ENCODE measurements at regions of chr6 and their contacts with region 1.

Region 1: DNA sequence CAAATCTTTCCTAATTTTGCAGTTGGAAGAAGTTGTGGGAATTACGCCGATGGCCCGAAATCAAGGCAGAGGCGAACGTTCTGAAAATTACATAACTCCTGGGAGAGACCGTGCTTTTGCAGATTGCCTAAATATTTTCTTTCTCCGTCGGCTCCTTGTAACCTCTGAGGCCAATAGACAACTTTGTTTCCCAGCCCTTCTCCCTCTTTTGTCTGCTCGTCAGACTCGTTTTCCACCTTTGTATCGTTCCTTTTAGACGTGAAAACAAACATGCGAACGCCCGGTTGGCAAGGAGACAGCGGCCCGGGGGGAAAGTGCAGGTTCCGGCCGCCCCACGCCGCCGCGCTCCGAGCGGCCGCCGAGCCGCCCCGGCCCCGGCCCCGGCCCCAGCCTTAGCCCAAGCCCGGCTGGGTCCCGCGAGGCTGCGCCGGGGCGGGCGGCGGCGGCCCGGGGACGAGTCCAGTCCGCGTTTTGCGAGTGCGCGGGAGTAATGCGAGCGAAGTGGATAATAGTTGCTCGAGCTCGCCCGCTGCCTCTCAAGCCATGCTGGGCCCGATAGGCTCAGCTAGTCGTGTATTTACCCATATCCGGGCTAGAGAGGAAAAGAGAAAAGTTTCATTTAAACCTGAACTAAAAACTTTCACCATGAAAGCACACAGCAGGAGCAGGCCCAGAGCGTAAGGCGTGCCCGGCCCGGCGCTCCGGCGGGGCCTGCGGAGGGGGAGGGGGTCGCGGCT is at the start of gene ARID1B:
- DNase-seq: peak; percentile 75
- H3K4me3 Mint-ChIP-seq: peak within 1 kb of the TSS; percentile 97
- H3K27ac Mint-ChIP-seq: peak within 1 kb of the TSS; percentile 98
- H3K4me1 Mint-ChIP-seq: peaks cover 52% of the 10 kb centered on the region
- H3K27me3 Mint-ChIP-seq: peaks cover 3% of the 10 kb centered on the region
- total RNA-seq, gene ARID1B: 73.6 and 79.1 TPM in 2 replicates

Region 2: GRCh38 chr6:156564127-156564806 is 212.7 kb before region 1 on chr6:
- intact Hi-C with region 1: loop called (anchors 2 kb)
- DNase-seq: peak; percentile 65
- H3K4me3 Mint-ChIP-seq: no peak overlapping the region
- H3K27ac Mint-ChIP-seq: no peak overlapping the region
- H3K4me1 Mint-ChIP-seq: peaks cover 7% of the 10 kb centered on the region
- H3K27me3 Mint-ChIP-seq: peaks cover 3% of the 10 kb centered on the region

Region 3: DNA sequence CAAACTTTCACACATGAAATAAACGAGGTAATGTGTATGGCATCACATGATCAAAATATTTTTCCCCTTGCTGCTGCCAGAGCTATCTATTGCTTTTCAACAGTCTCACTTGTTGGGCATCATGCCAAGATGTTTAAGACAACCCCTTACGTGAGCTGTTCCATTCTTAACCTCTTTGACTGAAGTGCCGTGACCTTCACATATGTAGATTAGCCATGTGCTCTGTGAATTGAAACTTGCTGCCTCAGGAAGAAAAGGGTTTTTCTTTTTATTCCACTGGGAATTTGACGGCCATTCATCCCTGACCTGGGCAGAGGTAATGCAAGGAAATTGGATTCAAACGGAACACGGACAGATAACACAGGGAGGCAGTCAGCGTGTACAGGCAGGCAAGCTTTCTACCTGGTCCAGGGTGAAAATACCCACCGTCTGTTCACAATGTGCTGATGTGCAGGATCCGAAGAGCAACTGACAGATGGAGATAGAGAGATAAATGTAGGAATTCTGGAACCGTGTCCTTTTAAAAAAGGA is 14.4 kb after region 1 on chr6:
- intact Hi-C with region 1: no loop called
- DNase-seq: no peak
- H3K4me3 Mint-ChIP-seq: no peak overlapping the region
- H3K27ac Mint-ChIP-seq: no peak overlapping the region
- H3K4me1 Mint-ChIP-seq: peaks cover 43% of the 10 kb centered on the region
- H3K27me3 Mint-ChIP-seq: no peaks in the 10 kb centered on the region

Region 4: DNA sequence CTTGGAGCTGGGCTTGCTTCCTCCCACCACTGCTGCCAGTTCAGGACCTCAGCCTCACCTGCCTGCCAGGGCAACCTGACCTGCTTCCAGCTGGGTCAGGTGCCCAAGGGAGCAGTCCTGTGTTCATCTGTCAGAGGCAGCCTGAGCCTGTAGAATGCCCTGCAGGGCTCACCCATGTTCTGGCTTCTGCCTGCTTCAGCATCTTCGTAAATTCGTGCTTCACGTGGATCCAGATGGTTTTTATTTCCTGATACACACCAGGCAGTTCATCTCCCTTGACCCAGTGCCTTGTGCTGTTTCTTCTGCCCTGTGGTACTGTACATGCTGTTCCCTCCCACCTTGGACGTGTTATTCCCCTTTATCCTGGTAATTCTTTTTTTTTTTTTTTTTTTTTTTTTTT is 50.4 kb after region 1 on chr6:
- intact Hi-C with region 1: no loop called
- DNase-seq: no peak
- H3K4me3 Mint-ChIP-seq: no peak overlapping the region
- H3K27ac Mint-ChIP-seq: peak overlapping the region; percentile 53
- H3K4me1 Mint-ChIP-seq: peaks cover 22% of the 10 kb centered on the region
- H3K27me3 Mint-ChIP-seq: no peaks in the 10 kb centered on the region

Region 5: GRCh38 chr6:156857573-156857972 is 80.6 kb after region 1 on chr6:
- intact Hi-C with region 1: loop called (anchors 1 kb)
- DNase-seq: peak; percentile 11
- H3K4me3 Mint-ChIP-seq: no peak overlapping the region
- H3K27ac Mint-ChIP-seq: peak overlapping the region; percentile 90
- H3K4me1 Mint-ChIP-seq: peaks cover 56% of the 10 kb centered on the region
- H3K27me3 Mint-ChIP-seq: no peaks in the 10 kb centered on the region

Region 6: DNA sequence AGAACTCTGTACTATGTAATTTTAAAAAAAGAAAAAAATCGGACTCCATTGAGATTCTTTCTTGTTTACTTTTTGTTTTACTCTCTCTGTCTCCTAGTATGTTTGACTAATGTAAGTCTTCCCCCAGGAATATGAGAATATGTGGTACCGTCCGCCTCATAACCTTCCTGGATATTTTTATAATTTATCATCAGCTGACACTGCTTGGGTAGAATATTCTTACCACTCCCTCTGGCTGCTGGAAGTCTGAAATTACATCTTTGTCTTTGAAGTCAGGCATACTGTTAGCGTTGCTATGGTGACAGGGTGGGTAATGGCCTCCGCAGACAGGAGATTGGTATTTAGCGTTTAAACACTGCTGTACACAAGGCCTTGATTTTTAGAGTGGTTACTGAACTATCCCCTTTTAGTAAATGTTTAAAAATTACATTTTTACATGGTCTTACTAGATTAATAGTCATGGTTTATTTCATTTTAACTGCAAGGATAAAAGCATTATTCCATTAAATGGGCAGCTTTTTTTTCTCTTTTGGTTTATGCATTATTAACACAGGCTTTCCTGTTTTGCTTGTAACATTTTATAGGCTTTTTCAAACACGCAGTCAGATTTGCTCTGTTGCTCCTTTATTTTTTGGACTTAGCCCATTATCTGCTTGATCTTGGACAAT is 176.6 kb after region 1 on chr6:
- intact Hi-C with region 1: loop called (anchors 2 kb)
- DNase-seq: peak; percentile 14
- H3K4me3 Mint-ChIP-seq: no peak overlapping the region
- H3K27ac Mint-ChIP-seq: peak overlapping the region; percentile 45
- H3K4me1 Mint-ChIP-seq: peaks cover 51% of the 10 kb centered on the region
- H3K27me3 Mint-ChIP-seq: no peaks in the 10 kb centered on the region

Region 7: GRCh38 chr6:157021344-157021992 is 244.5 kb after region 1 on chr6:
- intact Hi-C with region 1: loop called (anchors 1 kb)
- DNase-seq: peak; percentile 88
- H3K4me3 Mint-ChIP-seq: peak overlapping the region; percentile 91
- H3K27ac Mint-ChIP-seq: peak overlapping the region; percentile 98
- H3K4me1 Mint-ChIP-seq: peaks cover 49% of the 10 kb centered on the region
- H3K27me3 Mint-ChIP-seq: no peaks in the 10 kb centered on the region

Region 8: DNA sequence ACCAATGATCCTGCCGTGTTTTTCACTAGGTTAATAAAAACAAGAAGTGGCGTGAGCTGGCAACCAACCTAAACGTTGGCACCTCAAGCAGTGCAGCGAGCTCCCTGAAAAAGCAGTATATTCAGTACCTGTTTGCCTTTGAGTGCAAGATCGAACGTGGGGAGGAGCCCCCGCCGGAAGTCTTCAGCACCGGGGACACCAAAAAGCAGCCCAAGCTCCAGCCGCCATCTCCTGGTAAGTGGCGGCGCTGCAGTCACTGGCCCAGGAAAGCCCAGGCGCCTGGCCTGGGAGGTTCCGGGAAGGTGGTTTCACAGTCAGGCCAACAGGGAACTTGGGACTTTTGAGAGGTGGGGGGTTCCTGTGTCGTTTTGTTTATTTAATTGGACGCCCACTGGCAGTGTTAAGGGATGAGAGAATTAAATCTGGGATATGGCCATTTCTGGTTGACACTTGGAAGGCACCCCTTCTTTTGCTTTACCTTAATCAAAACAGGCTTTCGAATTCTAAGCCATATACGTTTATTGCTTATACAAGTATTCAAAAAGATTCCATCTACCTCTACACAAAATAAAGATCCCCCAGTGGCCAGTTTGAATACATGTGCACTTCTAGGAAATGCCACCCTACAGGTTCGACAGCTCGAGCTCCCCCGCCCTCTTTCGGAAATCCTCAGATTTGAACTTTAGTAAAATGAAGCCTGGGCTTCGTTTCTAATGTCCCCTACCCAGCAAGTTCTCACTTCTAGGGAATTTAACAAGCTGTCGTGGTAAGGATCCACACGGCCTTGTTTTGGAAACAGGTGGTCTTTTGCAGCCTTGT is 407.4 kb after region 1 on chr6:
- intact Hi-C with region 1: loop called (anchors 5 kb)
- DNase-seq: peak; percentile 37
- H3K4me3 Mint-ChIP-seq: no peak overlapping the region
- H3K27ac Mint-ChIP-seq: peak overlapping the region; percentile 64
- H3K4me1 Mint-ChIP-seq: peaks cover 25% of the 10 kb centered on the region
- H3K27me3 Mint-ChIP-seq: no peaks in the 10 kb centered on the region

Region 9: DNA sequence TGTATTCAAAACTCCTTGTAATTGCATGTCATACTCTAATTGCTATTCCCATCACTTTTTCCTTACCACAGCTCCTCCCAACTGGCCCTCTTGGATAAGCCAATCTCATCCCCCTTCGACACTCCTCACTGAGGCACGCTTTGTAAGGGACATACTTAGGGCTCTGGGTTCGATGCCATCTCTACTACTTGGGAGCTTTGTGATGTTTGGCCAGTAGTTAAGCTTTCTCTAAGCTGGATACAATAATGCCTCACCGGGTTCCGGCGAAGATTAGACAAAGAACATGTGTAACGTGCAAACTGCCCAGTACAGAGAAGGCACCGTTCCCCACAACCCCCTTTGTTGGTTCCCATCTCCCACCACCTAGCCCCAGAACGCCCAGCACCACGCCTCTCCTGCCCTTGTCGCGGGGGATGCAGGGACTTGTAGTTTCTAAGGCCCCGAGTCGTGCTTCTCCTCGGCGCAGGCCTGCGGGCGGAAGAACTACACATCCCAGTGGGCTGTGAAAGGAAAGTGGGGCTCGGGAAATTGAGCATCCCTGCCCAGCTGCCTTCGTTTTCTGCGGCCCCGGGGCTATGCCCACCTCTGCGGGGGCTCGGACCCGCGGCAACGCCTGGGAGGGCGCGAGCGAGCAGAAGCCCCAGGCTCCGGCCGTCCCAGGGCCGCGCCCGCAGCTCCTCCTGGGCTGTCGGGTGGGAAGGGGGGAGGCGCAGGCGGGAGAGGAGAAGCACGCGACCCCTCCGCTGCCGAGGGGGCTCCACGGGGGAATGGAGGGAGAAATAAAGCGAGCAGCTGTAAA is 602.8 kb after region 1 on chr6:
- intact Hi-C with region 1: no loop called
- DNase-seq: peak; percentile 86
- H3K4me3 Mint-ChIP-seq: peak overlapping the region; percentile 88
- H3K27ac Mint-ChIP-seq: peak overlapping the region; percentile 83
- H3K4me1 Mint-ChIP-seq: peaks cover 39% of the 10 kb centered on the region
- H3K27me3 Mint-ChIP-seq: peaks cover 6% of the 10 kb centered on the region